Activated CD4-positive, alpha-beta T cell treated with anti-CD3 and anti-CD28 coated beads, Interleukin-2, amount 10 ng/mL, durations not matched to agents 24 days and 14 days (primary cell): ENCODE measurements at regions of chr9 and their contacts with region 1.

Region 1: DNA sequence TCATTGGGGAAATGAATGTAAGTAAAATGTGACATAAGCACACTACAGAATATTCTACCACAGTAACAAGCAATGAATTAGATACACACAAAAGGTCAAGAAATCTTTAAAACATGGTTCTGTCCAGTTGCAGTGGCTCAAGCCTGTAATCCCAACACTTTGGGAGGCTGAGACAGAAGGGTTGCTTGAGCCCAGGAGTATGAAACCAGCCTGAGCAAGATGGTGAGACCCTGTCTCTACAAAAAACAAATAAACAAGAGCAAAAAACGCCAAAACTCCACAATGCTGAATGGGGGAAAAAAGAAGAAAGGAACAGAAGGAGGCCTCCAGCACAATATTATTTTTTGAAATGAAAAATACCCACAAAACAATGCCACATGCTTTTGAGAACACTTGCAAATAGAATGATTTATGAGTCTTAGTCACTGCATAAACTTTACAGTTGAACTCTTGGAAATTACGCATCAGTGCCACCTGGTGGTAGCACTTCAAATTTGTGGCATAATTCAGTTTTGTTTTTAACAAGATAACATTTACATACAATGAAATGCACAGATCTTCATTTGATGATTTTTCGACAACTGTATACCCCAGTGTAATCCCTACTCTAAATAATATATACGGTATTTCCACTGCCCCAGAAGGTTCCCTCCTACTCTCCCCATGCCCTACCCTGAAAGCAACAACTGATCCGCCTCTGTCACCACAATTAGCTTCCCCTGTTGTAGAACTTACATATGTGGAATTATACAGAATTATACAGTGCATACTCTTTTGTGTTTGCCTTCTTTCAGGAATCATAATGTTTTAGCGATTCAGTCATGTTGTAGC is 14.4 kb upstream of the SPINK4 start:
- DNase-seq: peak; percentile 92
- H3K4me3 Mint-ChIP-seq: no peak overlapping the region
- H3K27ac Mint-ChIP-seq: peak overlapping the region; percentile 0
- H3K4me1 Mint-ChIP-seq: peaks cover 23% of the 10 kb centered on the region
- H3K27me3 Mint-ChIP-seq: peaks cover 3% of the 10 kb centered on the region

Region 2: DNA sequence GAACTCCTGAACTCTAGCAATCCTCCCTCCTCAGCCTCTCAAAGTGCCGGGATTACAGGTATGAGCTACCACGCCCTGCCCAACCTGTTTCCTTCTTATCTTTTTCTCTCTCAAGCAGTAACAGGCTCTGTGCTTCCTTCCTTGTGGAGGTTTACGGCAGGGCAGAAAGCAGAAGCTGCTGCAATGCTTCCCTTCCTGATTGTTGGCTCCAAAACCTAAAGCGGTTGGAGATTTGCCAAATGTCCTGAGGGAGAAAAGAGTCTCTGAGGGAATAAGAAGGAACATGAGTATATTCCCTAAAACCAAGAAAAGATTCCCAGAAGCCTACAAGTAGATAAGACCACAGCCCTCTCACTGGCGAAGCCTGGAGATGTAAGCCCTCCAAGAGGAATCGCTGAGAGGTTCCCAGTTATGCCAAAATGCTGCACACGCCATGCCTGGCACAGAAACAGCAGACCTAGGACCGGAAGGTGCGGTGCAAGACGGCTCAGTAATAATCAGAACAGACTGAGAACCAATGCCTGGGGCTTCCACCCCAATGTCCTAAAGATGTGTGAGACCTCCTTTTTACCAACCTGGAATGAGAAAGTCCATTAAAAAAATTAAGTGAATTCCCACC is 297.3 kb before region 1 on chr9:
- intact Hi-C with region 1: no loop called
- DNase-seq: no peak
- H3K4me3 Mint-ChIP-seq: no peak overlapping the region
- H3K27ac Mint-ChIP-seq: no peak overlapping the region
- H3K4me1 Mint-ChIP-seq: no peaks in the 10 kb centered on the region
- H3K27me3 Mint-ChIP-seq: peaks cover 8% of the 10 kb centered on the region

Region 3: DNA sequence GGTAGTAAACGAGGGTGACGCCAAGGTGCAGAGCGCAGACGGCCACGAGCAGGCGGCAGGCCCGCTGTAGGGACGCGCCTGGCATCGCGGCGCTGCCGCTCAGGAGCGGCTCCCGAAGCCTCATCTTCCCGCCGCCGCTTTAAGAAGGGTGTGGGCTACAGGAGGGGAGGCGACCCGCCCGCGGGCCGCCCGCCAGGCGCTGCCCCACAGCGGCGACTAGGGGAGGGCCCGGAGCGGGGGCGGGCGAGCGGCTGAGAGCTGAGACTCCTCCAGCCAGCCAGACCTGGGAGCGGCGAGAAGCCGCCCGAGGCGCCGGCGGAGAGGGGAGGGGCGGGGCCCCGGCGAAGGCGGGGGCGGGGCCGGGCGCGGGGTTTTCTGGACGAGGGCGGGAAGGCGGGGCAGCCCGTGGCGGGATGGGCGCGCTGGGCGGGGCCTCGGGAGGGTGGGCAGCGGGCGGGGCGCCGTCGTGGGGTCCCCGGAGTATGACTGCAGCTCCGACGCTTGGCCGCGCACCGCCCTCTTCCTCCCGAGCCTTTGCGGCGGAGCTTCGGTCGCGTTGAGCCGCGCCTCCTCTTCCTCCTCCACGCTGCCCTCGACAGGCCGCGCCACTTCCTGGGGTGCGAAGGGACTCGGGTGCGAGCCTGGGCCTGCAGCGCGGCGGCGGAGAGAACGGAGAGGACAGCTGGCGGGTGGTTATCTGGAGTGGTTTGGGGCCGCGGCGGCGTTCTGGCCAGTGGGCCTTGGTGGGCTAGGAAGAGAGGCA is 58.3 kb before region 1 on chr9 and contains the start of gene B4GALT1:
- intact Hi-C with region 1: loop called (anchors 1 kb)
- DNase-seq: peak; percentile 97
- H3K4me3 Mint-ChIP-seq: peak within 1 kb of the TSS; percentile 95
- H3K27ac Mint-ChIP-seq: peak within 1 kb of the TSS; percentile 98
- H3K4me1 Mint-ChIP-seq: peaks cover 65% of the 10 kb centered on the region
- H3K27me3 Mint-ChIP-seq: no peaks in the 10 kb centered on the region
- total RNA-seq, gene B4GALT1: 53.8 and 55.7 TPM in 2 replicates

Region 4: GRCh38 chr9:33177639-33178038 is 47.9 kb before region 1 on chr9:
- intact Hi-C with region 1: no loop called
- DNase-seq: no peak
- H3K4me3 Mint-ChIP-seq: no peak overlapping the region
- H3K27ac Mint-ChIP-seq: no peak overlapping the region
- H3K4me1 Mint-ChIP-seq: peaks cover 3% of the 10 kb centered on the region
- H3K27me3 Mint-ChIP-seq: peaks cover 13% of the 10 kb centered on the region

Region 5: DNA sequence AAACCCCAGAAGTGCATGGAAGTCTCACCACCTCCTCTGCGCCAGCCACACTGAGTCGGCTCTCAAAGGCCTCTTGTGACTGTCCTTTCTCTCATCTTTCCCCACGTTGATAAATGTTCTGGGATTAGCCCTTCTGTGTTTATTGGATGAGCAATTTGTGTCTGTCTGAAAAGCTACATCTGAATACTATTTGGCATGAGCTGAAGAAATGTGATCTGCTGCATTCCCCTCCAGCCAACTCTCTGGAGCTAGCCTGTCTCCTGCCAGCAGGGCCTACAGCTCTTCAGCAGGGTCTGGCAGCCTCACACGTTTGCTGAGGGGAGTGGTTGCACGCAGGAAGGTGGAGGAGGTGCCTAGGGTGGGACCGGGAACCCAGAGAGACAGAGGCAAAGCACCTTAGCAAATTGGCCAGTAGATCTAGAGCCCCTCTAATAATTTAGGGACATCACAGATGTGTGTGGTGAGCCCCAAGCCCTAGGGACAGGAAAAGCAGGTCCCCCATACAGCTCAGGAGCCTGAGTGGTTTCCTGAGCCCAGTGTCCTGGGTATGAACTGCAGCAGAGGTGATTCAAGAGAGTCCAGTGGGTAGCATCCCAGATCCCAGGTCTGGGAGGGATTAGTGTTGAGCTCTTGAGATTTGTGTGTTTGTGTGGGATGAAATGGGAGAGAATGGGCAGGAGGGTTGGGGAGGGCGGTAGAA is 37.9 kb before region 1 on chr9:
- intact Hi-C with region 1: loop called (anchors 5 kb)
- DNase-seq: no peak
- H3K4me3 Mint-ChIP-seq: no peak overlapping the region
- H3K27ac Mint-ChIP-seq: no peak overlapping the region
- H3K4me1 Mint-ChIP-seq: peaks cover 5% of the 10 kb centered on the region
- H3K27me3 Mint-ChIP-seq: peaks cover 22% of the 10 kb centered on the region

Region 6: DNA sequence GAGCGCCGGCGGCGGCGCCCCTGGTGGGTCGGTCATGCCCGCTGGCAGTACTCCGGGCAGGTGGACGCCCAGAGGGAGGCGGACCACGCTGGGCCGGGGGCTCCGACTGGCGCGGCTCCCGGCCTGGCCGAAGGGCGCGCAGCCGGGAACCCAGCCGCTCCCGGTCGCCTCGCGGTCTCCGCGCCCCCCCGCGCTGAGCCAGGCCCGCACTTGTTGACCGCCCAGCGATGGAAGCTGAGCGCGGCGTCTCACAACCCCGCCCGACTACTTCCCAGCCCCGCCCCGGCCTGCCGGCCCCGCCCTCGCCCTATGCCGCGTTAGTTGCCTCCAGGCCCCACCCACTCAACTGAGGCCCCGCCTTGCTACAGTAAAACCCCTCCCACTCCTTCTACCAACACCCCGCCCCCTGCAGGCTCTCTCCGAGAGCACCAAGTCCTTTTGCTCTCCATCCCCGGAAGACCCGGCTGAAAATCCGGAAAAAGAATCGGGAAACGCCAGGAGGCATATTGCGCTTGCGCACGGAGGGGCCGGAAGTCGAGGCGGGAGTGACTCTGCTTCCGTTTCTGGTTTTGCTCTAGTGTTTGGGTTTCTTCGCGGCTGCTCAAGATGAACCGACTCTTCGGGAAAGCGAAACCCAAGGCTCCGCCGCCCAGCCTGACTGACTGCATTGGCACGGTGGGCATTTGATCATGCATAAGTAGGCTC is 39.1 kb after region 1 on chr9 and contains the starts of genes BAG1 and CHMP5:
- intact Hi-C with region 1: no loop called
- DNase-seq: peak; percentile 100
- H3K4me3 Mint-ChIP-seq: peak within 1 kb of the TSS; percentile 97
- H3K27ac Mint-ChIP-seq: peak within 1 kb of the TSS; percentile 99
- H3K4me1 Mint-ChIP-seq: peaks cover 52% of the 10 kb centered on the region
- H3K27me3 Mint-ChIP-seq: no peaks in the 10 kb centered on the region
- total RNA-seq, gene BAG1: 72.4 and 73.6 TPM in 2 replicates
- total RNA-seq, gene CHMP5: 73.9 and 77.7 TPM in 2 replicates

Region 7: DNA sequence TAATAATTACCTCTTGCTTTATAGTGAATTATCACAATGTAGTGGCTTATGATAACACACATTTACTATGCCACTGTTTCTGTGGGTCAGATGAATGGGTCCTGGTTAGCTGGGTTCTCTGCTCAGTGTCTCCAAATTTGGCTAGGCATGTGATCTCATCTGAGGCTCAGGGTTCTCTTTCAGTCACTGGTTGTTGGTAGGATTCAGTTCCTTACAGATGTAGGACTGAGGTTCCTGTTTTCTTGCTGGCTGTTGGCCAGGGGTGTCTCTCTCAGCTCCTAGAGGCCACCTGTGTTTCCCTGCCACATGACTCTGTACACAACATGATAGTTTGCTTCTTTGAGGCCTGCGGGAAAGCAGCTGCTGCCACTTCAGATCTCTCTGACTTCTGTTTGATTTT is 71.9 kb after region 1 on chr9:
- intact Hi-C with region 1: no loop called
- DNase-seq: peak; percentile 62
- H3K4me3 Mint-ChIP-seq: peak overlapping the region; percentile 39
- H3K27ac Mint-ChIP-seq: peak overlapping the region; percentile 79
- H3K4me1 Mint-ChIP-seq: peaks cover 53% of the 10 kb centered on the region
- H3K27me3 Mint-ChIP-seq: no peaks in the 10 kb centered on the region